HepG2 (cell line): ENCODE measurements at regions of chr7 and their contacts with region 1.

Region 1: DNA sequence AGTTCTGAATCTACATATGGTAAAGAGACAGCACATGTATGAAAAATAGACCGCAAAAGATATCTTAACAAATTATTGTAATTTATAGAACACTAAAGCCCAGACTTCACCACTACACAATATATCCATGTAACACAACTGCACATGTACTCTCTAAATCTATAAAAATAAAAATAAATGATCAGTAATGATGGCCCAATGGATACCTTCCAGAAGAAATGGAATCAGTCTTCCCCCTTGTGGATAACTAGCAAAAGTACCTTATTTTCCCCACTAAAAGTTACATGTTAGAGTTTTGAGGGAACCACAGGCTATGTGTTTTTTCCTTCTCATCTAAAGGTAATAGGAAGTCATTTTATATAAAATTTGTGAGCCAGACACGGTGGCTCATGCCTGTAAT is 25.7 kb downstream of the C7orf25 start:
- DNase-seq: no peak
- ATAC-seq: no peak
- H3K4me3 ChIP-seq: no peak overlapping the region
- H3K27ac ChIP-seq: no peak overlapping the region
- H3K4me1 ChIP-seq: peaks cover 11% of the 10 kb centered on the region
- H3K27me3 ChIP-seq: no peaks in the 10 kb centered on the region
- CTCF ChIP-seq: peak; percentile 11; the same call in 1 of the 2 replicates
- EP300 ChIP-seq: no peak
- POLR2A ChIP-seq: no peak
- RAD21 ChIP-seq: no peak

Region 2: DNA sequence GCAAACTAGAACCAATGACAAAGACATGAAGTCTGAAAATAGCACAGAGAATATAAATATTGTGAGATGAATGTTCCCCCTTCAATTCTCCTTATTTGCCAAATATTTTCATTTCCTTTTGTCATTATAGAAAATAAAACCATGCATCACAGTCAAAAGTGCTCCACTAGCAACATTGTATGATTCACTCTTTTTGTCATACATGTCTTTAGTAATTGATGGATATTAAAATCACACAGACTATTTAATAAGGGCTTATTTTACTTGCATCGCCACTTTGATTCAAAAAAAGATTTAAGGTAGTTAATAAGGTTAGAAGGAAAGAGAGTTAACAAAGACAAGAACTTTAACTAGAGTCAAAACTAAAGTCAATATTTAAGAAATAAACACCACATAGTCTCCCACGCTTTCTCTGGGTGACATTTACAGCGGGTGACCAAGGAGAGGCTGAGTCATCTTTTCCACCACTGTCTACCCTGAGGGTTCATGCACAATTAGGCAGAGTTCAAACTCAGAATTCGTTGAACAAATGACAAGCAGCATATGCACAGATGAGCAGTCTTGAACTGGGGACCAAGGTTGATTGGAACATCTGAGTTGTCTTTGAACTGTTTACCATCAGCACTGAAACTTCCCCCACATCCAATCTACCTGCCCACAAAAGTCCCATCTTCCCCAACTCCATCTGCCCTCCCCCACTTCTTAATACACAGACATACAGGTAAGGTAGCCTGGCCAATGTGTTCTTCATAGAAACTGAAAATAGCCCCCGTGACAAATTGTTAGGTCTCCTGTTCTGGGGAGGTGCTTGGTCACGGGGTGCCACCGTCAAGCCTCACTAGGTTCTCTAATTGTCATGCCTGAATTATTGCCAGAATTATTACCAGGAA is 16.8 kb before region 1 on chr7:
- CTCF ChIA-PET with region 1: no interaction called
- POLR2A ChIA-PET with region 1: no interaction called
- in situ Hi-C with region 1: no loop called
- intact Hi-C with region 1: no loop called
- DNase-seq: no peak
- ATAC-seq: no peak
- H3K4me3 ChIP-seq: no peak overlapping the region
- H3K27ac ChIP-seq: no peak overlapping the region
- H3K4me1 ChIP-seq: peaks cover 8% of the 10 kb centered on the region; the same call in 1 of the 2 replicates
- H3K27me3 ChIP-seq: 0 out of 5 replicates have a peak, but pooled peaks cover 0 to 3% of the 10 kb centered on the region in 2 experiments
- CTCF ChIP-seq: no peak
- EP300 ChIP-seq: no peak
- POLR2A ChIP-seq: no peak
- RAD21 ChIP-seq: no peak

Region 3: GRCh38 chr7:42931834-42932651 is 45.9 kb after region 1 on chr7 and contains the starts of genes MRPL32 and PSMA2:
- CTCF ChIA-PET with region 1: no interaction called
- POLR2A ChIA-PET with region 1: interaction called, 22 read pairs
- in situ Hi-C with region 1: no loop called
- intact Hi-C with region 1: loop called (anchors 2 kb)
- DNase-seq: peak; percentile 97
- ATAC-seq: peak; percentile 100
- H3K4me3 ChIP-seq: peak within 1 kb of the TSS; percentile 85 to 97 (median 94)
- H3K27ac ChIP-seq: peak within 1 kb of the TSS; percentile 76
- H3K4me1 ChIP-seq: peaks cover 55% of the 10 kb centered on the region
- H3K27me3 ChIP-seq: no peaks in the 10 kb centered on the region; a peak in 1 of 5 replicates
- CTCF ChIP-seq: no peak
- EP300 ChIP-seq: no peak
- POLR2A ChIP-seq: peak; percentile 79 to 91
- RAD21 ChIP-seq: no peak; the same call in 1 of the 2 replicates
- total RNA-seq, gene MRPL32: 56.0 and 81.2 TPM in 2 replicates
- total RNA-seq, gene PSMA2: 266 and 383 TPM in 2 replicates